CD4-positive, alpha-beta T cell (primary cell): ENCODE measurements at regions of chr1 and their contacts with region 1.

Region 1: DNA sequence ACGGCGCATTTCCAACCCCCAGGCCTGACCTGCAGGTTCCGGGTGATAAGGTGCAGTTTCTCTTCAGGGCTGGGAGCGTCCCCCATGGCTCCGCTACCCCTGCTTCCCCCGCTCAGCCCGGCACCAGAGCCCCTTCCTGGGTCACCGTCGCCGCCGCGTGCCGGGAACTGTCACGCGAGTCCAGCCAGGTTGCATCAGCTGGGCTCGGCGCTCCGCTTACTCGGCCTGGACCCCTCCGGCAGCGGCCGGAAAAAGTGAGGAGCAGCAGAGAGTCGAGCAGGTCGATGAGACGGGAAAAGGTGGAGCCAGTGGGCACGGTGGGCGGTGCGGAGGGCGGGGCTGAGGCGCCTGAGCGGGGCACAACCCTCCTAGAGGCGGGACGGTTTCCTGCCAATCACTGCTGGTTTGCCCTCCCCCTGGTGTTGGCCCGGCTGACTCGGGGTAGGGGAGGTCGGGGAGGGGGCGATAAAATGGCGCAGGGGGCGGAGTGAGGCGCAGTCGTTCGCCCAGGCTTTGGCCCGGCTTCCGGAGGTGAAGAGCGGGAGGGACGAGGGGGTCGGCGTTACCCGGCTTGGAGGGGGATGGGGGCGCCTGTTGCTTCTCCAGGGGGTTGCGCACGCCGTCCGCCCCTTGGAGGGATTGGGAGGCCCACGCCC is at the starts of genes S100PBP and YARS1:
- DNase-seq: peak; percentile 98 to 100 (median 100)
- ATAC-seq: peak; percentile 94
- H3K4me3 ChIP-seq: peak within 1 kb of the TSS; percentile 99
- H3K4me3 Mint-ChIP-seq: peak within 1 kb of the TSS; percentile 100
- H3K27ac ChIP-seq: peak within 1 kb of the TSS; percentile 85 to 87
- H3K27ac Mint-ChIP-seq: peak within 1 kb of the TSS; percentile 96
- H3K4me1 ChIP-seq: peaks cover 60% of the 10 kb centered on the region
- H3K4me1 Mint-ChIP-seq: peaks cover 63% of the 10 kb centered on the region
- H3K27me3 ChIP-seq: no peaks in the 10 kb centered on the region
- H3K27me3 Mint-ChIP-seq: no peaks in the 10 kb centered on the region
- CTCF ChIP-seq: no peak
- total RNA-seq, gene S100PBP: 18.8 to 21.6 TPM
- total RNA-seq, gene YARS1: 67.6 to 73.2 TPM

Region 2: GRCh38 chr1:31296486-31297276 is 1520.6 kb before region 1 on chr1 and contains the starts of genes SNRNP40 and ZCCHC17:
- CTCF ChIA-PET with region 1: no interaction called
- POLR2A ChIA-PET with region 1: no interaction called
- intact Hi-C with region 1: loop called in 1 of 2 experiments (anchors 10 kb)
- DNase-seq: peak; percentile 84 to 99 (median 90)
- ATAC-seq: peak; percentile 94
- H3K4me3 ChIP-seq: peak within 1 kb of the TSS; percentile 90
- H3K4me3 Mint-ChIP-seq: no peak within 1 kb of the TSS
- H3K27ac ChIP-seq: peak within 1 kb of the TSS; percentile 83 to 91
- H3K27ac Mint-ChIP-seq: no peak within 1 kb of the TSS
- H3K4me1 ChIP-seq: peaks cover 41% of the 10 kb centered on the region
- H3K4me1 Mint-ChIP-seq: peaks cover 13% of the 10 kb centered on the region
- H3K27me3 ChIP-seq: no peaks in the 10 kb centered on the region
- H3K27me3 Mint-ChIP-seq: no peaks in the 10 kb centered on the region
- CTCF ChIP-seq: no peak
- total RNA-seq, gene SNRNP40: 48.4 to 53.7 TPM
- total RNA-seq, gene ZCCHC17: 7.3 to 7.6 TPM

Region 3: GRCh38 chr1:32650752-32651460 is 166.4 kb before region 1 on chr1 and contains the start of gene RBBP4:
- CTCF ChIA-PET with region 1: no interaction called
- POLR2A ChIA-PET with region 1: interaction called, 24 read pairs
- intact Hi-C with region 1: loop called in 1 of 2 experiments (anchors 2 kb)
- DNase-seq: peak; percentile 94 to 99 (median 98)
- ATAC-seq: peak; percentile 79
- H3K4me3 ChIP-seq: peak within 1 kb of the TSS; percentile 80
- H3K4me3 Mint-ChIP-seq: peak within 1 kb of the TSS; percentile 94
- H3K27ac ChIP-seq: peak within 1 kb of the TSS; percentile 98 to 99
- H3K27ac Mint-ChIP-seq: peak within 1 kb of the TSS; percentile 95
- H3K4me1 ChIP-seq: peaks cover 58% of the 10 kb centered on the region
- H3K4me1 Mint-ChIP-seq: peaks cover 66% of the 10 kb centered on the region
- H3K27me3 ChIP-seq: no peaks in the 10 kb centered on the region
- H3K27me3 Mint-ChIP-seq: no peaks in the 10 kb centered on the region
- CTCF ChIP-seq: no peak
- total RNA-seq, gene RBBP4: 108 to 117 TPM

Region 4: DNA sequence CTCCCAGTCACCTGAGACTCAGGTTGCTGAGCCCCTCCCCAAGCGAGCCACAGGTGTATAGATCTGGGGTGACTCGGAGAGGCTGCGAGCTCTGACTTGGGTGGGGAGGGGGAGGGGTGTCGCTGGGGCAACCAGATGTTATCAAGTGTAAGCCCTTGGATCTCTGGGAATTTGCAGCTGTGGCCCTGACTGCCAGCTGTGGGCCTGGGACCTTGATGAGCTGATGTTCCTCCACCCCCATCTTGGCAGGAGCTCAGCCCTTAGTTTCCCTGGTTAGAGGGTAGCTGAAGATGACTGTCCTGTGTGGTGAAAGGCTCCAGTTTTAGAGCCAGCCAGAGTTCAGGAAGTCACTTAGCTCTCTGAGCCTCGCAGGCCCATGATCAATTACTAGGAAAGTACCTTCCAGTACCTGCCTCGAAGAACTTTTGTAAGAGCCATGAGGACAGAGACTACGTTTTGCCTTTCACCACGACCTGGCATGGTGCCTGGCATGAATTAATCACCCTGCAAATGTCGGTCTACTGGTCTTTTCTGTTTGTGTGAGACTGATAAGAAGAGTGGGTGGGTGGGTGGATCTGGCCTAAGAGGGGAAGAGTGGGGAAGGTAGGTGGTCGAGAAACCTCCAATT is 55.9 kb before region 1 on chr1:
- CTCF ChIA-PET with region 1: no interaction called
- POLR2A ChIA-PET with region 1: no interaction called
- intact Hi-C with region 1: no loop called
- DNase-seq: peak in 2 of 14 experiments; percentile 21 to 33
- ATAC-seq: no peak
- H3K4me3 ChIP-seq: no peak overlapping the region
- H3K4me3 Mint-ChIP-seq: no peak overlapping the region
- H3K27ac ChIP-seq: no peak overlapping the region
- H3K27ac Mint-ChIP-seq: no peak overlapping the region
- H3K4me1 ChIP-seq: peaks cover 15% of the 10 kb centered on the region
- H3K4me1 Mint-ChIP-seq: peaks cover 34% of the 10 kb centered on the region
- H3K27me3 ChIP-seq: no peaks in the 10 kb centered on the region
- H3K27me3 Mint-ChIP-seq: no peaks in the 10 kb centered on the region
- CTCF ChIP-seq: no peak

Region 5: GRCh38 chr1:32798679-32799416 is 18.4 kb before region 1 on chr1:
- CTCF ChIA-PET with region 1: no interaction called
- POLR2A ChIA-PET with region 1: interaction called, 5 read pairs
- intact Hi-C with region 1: loop called in 1 of 2 experiments (anchors 2 kb)
- DNase-seq: peak in 4 of 14 experiments; percentile 9 to 83 (median 78)
- ATAC-seq: peak; percentile 62
- H3K4me3 ChIP-seq: no peak overlapping the region
- H3K4me3 Mint-ChIP-seq: peak overlapping the region; percentile 1
- H3K27ac ChIP-seq: peak overlapping the region; percentile 33 to 35
- H3K27ac Mint-ChIP-seq: peak overlapping the region; percentile 80
- H3K4me1 ChIP-seq: peaks cover 50% of the 10 kb centered on the region
- H3K4me1 Mint-ChIP-seq: peaks cover 42% of the 10 kb centered on the region
- H3K27me3 ChIP-seq: no peaks in the 10 kb centered on the region
- H3K27me3 Mint-ChIP-seq: no peaks in the 10 kb centered on the region
- CTCF ChIP-seq: no peak

Region 6: GRCh38 chr1:32948905-32949304 is 131.6 kb after region 1 on chr1:
- CTCF ChIA-PET with region 1: no interaction called
- POLR2A ChIA-PET with region 1: no interaction called
- intact Hi-C with region 1: no loop called
- DNase-seq: no peak
- ATAC-seq: no peak
- H3K4me3 ChIP-seq: no peak overlapping the region
- H3K4me3 Mint-ChIP-seq: no peak overlapping the region
- H3K27ac ChIP-seq: no peak overlapping the region
- H3K27ac Mint-ChIP-seq: no peak overlapping the region
- H3K4me1 ChIP-seq: no peaks in the 10 kb centered on the region
- H3K4me1 Mint-ChIP-seq: peaks cover 13% of the 10 kb centered on the region
- H3K27me3 ChIP-seq: no peaks in the 10 kb centered on the region
- H3K27me3 Mint-ChIP-seq: no peaks in the 10 kb centered on the region
- CTCF ChIP-seq: no peak

Region 7: DNA sequence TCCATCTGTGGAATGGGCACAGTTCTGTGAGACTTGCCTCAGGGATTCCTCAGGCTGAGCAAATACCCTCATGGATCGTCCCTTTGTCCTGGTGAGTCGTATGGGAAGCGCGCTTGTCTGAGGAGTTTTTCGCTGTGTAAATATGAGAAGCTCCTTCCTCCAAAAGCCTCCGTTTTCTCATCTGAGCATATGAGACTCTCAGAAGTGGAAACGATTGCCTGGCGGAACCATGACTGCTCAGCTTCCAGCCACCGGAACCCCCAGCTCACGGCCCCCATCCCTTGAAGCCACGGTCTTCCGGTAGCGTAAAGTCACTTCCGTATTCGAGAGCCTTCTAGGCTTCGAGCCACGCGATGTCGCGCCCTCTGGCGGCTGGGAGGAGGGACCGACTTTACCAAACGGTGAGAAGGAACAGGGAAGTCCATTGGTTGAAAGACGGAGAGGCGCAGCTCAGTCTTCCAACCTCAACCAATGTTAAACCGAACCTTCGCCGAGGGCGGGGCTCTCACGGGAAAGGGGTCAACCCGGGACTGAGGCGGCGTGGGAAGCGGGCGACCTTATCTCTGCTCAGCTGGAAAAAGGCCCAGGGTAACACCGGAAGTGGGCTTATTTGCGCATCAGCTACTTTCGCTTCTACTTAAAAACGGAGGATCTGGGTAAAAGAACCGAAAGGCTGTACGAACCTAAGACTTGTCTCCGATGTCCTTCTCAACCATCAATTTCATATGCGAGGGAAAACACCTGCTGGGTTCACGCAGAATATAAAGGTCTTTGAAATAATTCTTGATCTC is 309.9 kb after region 1 on chr1:
- CTCF ChIA-PET with region 1: no interaction called
- POLR2A ChIA-PET with region 1: interaction called, 9 read pairs
- intact Hi-C with region 1: loop called in 1 of 2 experiments (anchors 5 kb)
- DNase-seq: peak; percentile 95 to 100 (median 98)
- ATAC-seq: peak; percentile 82
- H3K4me3 ChIP-seq: peak overlapping the region; percentile 66
- H3K4me3 Mint-ChIP-seq: peak overlapping the region; percentile 88
- H3K27ac ChIP-seq: peak overlapping the region; percentile 84 to 90
- H3K27ac Mint-ChIP-seq: peak overlapping the region; percentile 99
- H3K4me1 ChIP-seq: peaks cover 27% of the 10 kb centered on the region
- H3K4me1 Mint-ChIP-seq: peaks cover 57% of the 10 kb centered on the region
- H3K27me3 ChIP-seq: no peaks in the 10 kb centered on the region
- H3K27me3 Mint-ChIP-seq: no peaks in the 10 kb centered on the region
- CTCF ChIP-seq: peak; percentile 82

Region 8: GRCh38 chr1:33472349-33472980 is 655.2 kb after region 1 on chr1 and contains the start of gene ZSCAN20:
- CTCF ChIA-PET with region 1: no interaction called
- POLR2A ChIA-PET with region 1: no interaction called
- intact Hi-C with region 1: loop called in 1 of 2 experiments (anchors 10 kb)
- DNase-seq: peak; percentile 62 to 91 (median 80)
- ATAC-seq: peak; percentile 98
- H3K4me3 ChIP-seq: peak within 1 kb of the TSS; percentile 63
- H3K4me3 Mint-ChIP-seq: peak within 1 kb of the TSS; percentile 90
- H3K27ac ChIP-seq: peak within 1 kb of the TSS; percentile 31 to 39
- H3K27ac Mint-ChIP-seq: peak within 1 kb of the TSS; percentile 24
- H3K4me1 ChIP-seq: peaks cover 22% of the 10 kb centered on the region
- H3K4me1 Mint-ChIP-seq: peaks cover 38% of the 10 kb centered on the region
- H3K27me3 ChIP-seq: no peaks in the 10 kb centered on the region
- H3K27me3 Mint-ChIP-seq: no peaks in the 10 kb centered on the region
- CTCF ChIP-seq: no peak
- total RNA-seq, gene ZSCAN20: 0.27 to 0.50 TPM